Posterior vena cava (tissue), 2 donors: ENCODE measurements at regions of chr7 and their contacts with region 1.

Region 1: DNA sequence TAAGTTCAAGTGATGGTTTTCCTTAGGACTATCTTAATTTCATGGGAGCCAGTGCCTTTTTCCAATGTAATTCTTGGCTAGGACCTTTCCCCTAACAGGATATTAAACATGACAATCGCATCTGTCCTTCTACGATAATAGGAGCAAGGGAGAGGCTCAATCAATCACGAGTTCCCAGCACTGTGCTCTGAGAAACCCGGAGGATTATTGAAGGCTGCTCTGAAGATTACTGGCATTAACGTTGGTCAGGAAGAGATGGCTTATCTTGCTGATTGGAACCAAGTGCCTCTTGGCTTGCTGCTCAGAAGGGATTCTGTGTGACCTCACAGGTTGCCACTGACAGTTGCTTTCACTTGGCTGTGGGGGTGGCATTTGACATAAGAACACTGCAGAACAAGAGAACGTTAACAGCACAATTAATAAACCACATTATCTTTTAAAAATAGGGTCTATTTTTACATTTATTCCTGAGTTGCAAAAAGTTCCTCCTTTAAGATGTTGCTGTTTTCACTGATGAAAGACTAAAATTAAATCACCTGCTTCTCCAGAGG is 252.1 kb upstream of the TAC1 start:
- DNase-seq: no peak

Region 2: GRCh38 chr7:96052860-96053470 is 1426.8 kb before region 1 on chr7:
- intact Hi-C with region 1: loop called in 1 of 2 experiments (anchors 5 kb)
- DNase-seq: no peak

Region 3: GRCh38 chr7:97285348-97285747 is 194.5 kb before region 1 on chr7:
- intact Hi-C with region 1: no loop called
- DNase-seq: no peak

Region 4: DNA sequence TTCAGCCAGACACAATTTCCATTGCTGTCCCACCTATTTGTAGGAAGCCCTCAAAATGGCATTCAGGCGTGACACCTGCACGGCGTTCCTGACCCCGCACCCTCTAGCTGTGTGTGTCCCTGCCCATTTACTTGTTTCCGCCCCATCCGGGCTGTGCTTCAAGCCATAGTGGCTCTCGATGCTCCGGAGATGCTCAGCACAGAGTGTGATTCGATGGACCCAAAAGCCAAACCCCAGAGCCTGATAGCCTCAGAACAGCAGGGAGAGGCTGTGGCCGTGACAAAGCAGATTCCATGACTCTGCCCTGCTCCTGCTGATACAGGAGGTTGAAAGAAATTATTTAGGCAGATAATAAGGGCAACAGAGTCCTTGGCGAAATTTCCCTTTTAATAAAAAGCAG is 1942.4 kb after region 1 on chr7:
- intact Hi-C with region 1: loop called in 1 of 2 experiments (anchors 10 kb)
- DNase-seq: no peak